Astrocyte of the cerebellum (primary cell): ENCODE measurements at regions of chr1 and their contacts with region 1.

Region 1: GRCh38 chr1:166283190-166283589 is 116.4 kb upstream of the FAM78B start:
- DNase-seq: no peak
- H3K4me3 ChIP-seq: no peak overlapping the region
- CTCF ChIP-seq: no peak

Region 2: GRCh38 chr1:166197141-166197540 is 86.0 kb before region 1 on chr1:
- in situ Hi-C with region 1: no loop called
- DNase-seq: no peak
- H3K4me3 ChIP-seq: no peak overlapping the region
- CTCF ChIP-seq: no peak

Region 3: DNA sequence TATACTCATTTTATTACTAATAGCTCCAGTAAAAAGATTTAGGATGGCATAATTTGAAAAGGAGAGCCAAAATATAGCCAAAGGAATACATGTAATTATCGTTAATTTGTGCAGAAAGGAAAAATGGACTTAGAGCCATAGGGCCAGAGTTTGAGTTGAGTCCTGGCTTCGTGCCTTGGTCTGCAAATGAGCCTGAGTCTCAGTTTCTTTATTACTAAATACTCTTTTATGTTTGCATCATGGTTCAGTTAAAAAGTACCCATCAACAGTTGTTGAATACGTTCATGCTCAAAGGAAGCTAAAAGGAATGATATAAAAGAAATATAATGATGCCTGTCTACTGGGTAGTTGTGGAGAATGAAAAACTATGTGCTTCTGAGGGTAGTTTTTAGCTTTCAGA is 39.3 kb after region 1 on chr1:
- in situ Hi-C with region 1: loop called (anchors 5 kb)
- DNase-seq: no peak
- H3K4me3 ChIP-seq: no peak overlapping the region
- CTCF ChIP-seq: no peak

Region 4: DNA sequence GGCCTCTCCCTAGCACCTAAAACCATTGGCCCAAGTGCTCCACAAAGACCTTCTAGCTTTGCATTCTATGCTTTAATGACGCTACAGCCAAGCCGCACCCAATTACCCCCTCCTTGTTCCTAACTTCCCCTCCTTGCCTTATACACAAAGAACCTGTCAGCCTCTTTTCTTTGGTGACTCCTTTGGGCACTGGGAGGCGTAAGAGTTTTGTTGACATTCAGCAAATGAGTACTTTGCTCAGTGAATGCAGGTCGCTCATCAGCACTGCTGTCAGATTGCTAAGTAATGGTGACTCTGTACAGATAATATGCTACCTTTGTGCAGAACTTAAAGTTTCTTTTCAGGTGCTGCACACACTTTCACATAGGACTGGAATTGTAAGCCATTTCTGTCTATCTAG is 71.2 kb after region 1 on chr1:
- in situ Hi-C with region 1: no loop called
- DNase-seq: no peak
- H3K4me3 ChIP-seq: no peak overlapping the region
- CTCF ChIP-seq: no peak